HepG2 (cell line): ENCODE measurements at regions of chr21 and their contacts with region 1.

Region 1: GRCh38 chr21:42705746-42706374 is 52.4 kb downstream of the PDE9A start:
- DNase-seq: no peak
- ATAC-seq: no peak
- H3K4me3 ChIP-seq: no peak overlapping the region
- H3K27ac ChIP-seq: no peak overlapping the region
- H3K4me1 ChIP-seq: peaks cover 26% of the 10 kb centered on the region
- H3K27me3 ChIP-seq: no peaks in the 10 kb centered on the region
- CTCF ChIP-seq: no peak
- EP300 ChIP-seq: no peak
- POLR2A ChIP-seq: no peak
- RAD21 ChIP-seq: no peak

Region 2: DNA sequence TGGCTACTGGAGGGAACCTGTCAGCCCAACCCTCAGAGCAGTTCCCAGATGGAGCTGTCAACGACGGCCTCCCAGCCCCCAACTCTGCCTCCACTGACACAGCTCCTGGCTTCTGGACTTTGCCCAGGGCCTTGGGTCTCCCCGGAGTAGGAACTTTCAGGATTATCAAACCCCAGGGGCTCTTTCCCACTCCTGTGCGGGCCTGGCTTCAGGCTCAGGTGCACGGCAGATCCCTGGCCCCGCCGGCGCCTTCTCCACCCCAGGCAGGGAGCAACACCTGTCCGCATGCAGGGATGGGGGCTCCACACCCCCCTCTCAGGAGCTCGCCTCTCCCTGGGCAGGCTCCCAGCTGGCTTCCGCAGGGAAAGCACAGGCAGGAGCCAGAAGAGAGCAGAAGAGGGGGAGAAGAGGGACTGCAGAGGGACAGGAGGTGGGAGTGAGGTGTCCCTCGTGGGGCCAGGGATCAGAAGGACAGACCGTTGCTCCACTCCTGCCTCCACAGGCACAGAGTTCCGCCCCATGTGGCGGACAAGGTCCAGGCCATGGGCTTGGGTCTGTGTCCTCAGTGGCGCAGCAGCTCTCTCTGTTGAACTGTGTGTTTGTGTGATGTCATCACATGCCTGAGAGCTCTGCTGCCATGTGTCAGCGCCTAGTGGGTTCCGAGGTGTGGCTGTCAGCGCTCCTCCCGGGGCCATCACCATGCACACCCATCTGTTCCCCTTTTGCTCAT is 55.3 kb after region 1 on chr21:
- CTCF ChIA-PET with region 1: no interaction called
- POLR2A ChIA-PET with region 1: no interaction called
- in situ Hi-C with region 1: loop called (anchors 10 kb)
- intact Hi-C with region 1: no loop called
- DNase-seq: peak; percentile 66
- ATAC-seq: peak; percentile 77
- H3K4me3 ChIP-seq: peak overlapping the region in 1 of 3 experiments; percentile 17; a peak in 1 of 6 replicates
- H3K27ac ChIP-seq: peak overlapping the region; percentile 81
- H3K4me1 ChIP-seq: peaks cover 43% of the 10 kb centered on the region
- H3K27me3 ChIP-seq: no peaks in the 10 kb centered on the region
- CTCF ChIP-seq: 0 out of 2 replicates have a peak, but pooled peaks have one; percentile 16
- EP300 ChIP-seq: peak in 1 of 2 experiments; percentile 37; a peak in 1 of 4 replicates
- POLR2A ChIP-seq: no peak; a peak in 1 of 4 replicates
- RAD21 ChIP-seq: no peak

Region 3: DNA sequence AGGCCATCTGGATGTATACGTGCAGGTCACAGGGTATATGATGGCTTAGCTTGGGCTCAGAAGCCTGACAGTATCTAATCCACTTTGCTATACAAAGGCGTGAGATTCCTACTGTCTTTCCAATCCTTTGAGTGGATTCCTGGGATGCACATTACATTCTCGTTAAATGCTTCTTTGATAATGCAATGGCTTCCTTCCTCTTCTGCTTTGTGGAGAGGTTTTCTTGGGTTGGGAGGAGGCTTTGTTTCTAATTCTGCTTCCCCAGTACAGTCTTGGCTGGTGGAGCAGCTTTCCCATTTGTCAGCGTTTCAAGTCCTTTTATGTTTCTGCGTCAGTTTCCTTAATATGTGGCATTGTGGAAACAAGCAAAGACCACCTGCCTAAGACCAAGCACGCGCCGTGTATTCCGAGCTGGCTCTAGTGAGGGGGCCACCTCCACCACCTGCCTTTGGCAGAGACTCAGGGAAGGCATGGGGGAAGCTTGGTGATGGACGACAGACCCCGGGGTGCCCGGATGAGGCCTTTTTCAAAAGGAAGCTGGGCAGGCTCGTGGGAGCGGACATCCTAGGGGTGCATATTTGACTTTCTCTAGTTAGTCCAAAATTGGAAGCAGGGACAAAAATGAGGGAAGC is 100.8 kb after region 1 on chr21:
- CTCF ChIA-PET with region 1: no interaction called
- POLR2A ChIA-PET with region 1: no interaction called
- in situ Hi-C with region 1: loop called (anchors 10 kb)
- intact Hi-C with region 1: no loop called
- DNase-seq: no peak
- ATAC-seq: peak; percentile 40
- H3K4me3 ChIP-seq: no peak overlapping the region
- H3K27ac ChIP-seq: no peak overlapping the region
- H3K4me1 ChIP-seq: peaks cover 40% of the 10 kb centered on the region
- H3K27me3 ChIP-seq: no peaks in the 10 kb centered on the region; a peak in 1 of 5 replicates
- CTCF ChIP-seq: no peak
- EP300 ChIP-seq: no peak
- POLR2A ChIP-seq: no peak
- RAD21 ChIP-seq: no peak